ENCODE measurements at regions of chr17 and their contacts with region 1.

Region 1: DNA sequence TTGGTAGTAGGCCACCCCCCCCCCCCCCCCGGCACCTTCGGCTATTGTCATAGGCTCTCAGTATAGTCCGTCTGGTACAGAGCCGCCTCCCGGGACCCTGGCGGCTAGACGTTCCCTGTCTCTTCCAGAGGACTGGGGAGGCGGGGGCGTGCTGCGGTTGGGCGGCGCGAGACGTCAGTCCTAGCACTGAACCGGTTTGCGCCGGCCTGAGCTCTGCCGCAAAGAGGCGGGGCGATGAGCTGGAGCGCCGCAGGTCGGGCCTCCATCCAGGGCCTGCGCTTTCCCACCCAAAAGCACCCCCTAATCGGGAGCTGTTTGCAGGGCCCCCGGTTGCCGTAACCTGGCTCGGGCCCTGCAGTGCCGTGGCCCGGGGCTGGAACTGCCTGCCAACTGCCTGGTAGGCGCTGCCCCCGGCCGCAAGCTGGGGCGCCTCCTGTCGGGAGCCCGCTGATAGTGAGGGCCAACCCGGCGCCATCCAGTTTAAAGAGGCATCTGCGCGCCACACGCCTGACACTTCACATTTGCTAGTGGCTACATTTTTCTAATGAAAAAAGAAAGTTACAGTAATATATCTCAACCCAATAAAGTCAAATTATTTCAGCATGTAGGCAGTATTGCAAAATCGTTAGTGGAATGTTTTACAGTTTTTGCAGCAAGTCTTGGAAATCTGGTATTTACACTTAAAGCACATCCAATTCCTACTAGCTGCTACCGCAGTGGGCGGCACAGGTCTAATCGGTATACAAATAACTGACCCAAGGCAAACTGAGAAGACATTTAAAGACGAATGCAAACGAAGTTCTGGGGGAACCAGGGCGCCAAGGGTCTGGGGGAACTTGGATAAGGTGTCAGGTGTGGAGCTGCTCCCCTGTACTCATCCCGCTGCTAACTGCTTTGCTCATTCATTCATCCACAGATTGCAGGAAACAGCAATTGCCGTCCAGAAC is 748 bp upstream of the USP22 start:
- DNase-seq: peak; percentile 95 to 98
- H3K4me3 ChIP-seq: peak overlapping the region; percentile 65
- H3K27ac ChIP-seq: peak overlapping the region; percentile 33; the same call in 1 of the 2 replicates
- H3K4me1 ChIP-seq: peaks cover 20% of the 10 kb centered on the region
- H3K27me3 ChIP-seq: no peaks in the 10 kb centered on the region
- CTCF ChIP-seq: peak; percentile 82

Region 2: DNA sequence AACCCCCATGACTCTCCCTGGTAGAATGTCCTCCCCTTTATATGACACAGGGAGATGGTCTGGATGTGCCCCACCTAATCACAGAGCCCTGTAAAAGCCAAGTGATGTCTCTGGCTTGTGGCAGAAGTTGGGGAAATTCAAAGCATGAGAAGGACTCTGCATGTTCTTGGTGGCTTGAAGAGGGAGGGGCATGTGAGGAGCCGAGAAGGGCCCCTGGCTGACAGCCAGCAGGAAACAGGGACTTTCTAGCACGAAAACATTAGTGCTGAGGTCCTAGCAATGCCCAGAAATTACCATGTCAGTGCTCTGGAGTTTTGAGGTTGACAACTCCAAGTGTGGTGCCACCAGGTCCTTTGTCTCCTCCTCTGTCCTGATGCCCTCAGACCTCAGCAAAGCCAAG is 76.7 kb before region 1 on chr17:
- CTCF ChIA-PET with region 1: no interaction called
- POLR2A ChIA-PET with region 1: no interaction called
- intact Hi-C with region 1: no loop called
- DNase-seq: peak in 1 of 2 experiments; percentile 26
- H3K4me3 ChIP-seq: no peak overlapping the region
- H3K27ac ChIP-seq: no peak overlapping the region
- H3K4me1 ChIP-seq: no peaks in the 10 kb centered on the region
- H3K27me3 ChIP-seq: peaks cover 20% of the 10 kb centered on the region; the same call in 1 of the 2 replicates
- CTCF ChIP-seq: no peak

Region 3: DNA sequence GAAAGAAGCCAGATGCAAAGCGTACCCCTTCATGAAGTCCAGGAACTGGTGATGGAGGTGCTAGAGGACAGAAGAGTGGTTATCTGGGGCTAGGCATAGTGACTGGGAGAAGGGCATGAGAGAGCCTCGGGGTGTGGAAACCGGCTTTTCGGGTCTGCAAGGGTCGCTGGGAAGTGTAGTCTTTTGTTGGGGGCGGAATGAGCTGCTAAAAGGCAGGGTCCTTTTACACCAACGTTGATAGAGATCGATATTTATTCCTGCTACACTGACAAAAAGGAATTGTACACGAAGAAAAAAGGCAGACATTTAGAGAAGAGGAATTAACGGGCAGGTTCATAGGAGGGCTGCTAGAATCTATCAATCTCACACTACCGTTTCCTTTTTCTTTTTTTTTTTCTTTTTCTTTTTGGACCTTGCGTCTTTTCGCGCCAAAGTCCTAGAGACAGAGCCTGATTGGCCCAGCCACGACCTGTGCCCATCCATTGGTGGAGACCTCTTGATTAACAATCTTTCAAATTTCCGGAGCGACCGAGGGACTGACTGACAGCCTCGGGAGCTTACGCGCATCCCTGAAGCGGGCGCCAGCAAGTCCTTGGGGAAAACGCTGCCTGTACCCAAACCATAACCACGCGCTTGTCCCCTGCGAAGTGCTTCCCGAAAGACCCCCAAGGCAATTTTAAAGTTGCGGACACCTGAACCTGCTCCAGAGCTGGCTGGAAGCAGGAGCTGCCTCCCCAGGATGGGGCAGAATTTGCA is 55.6 kb after region 1 on chr17:
- CTCF ChIA-PET with region 1: interaction called, 8 read pairs
- POLR2A ChIA-PET with region 1: interaction called, 24 read pairs
- intact Hi-C with region 1: loop called (anchors 1 kb)
- DNase-seq: peak; percentile 78 to 81
- H3K4me3 ChIP-seq: peak overlapping the region; percentile 80
- H3K27ac ChIP-seq: no peak overlapping the region
- H3K4me1 ChIP-seq: peaks cover 7% of the 10 kb centered on the region; the same call in 1 of the 2 replicates
- H3K27me3 ChIP-seq: no peaks in the 10 kb centered on the region
- CTCF ChIP-seq: no peak

Region 4: GRCh38 chr17:21126645-21127510 is 83.3 kb after region 1 on chr17 and contains the start of gene DHRS7B:
- CTCF ChIA-PET with region 1: no interaction called
- POLR2A ChIA-PET with region 1: no interaction called
- intact Hi-C with region 1: loop called (anchors 1 kb)
- DNase-seq: peak; percentile 92 to 97
- H3K4me3 ChIP-seq: peak within 1 kb of the TSS; percentile 93
- H3K27ac ChIP-seq: peak within 1 kb of the TSS; percentile 57
- H3K4me1 ChIP-seq: peaks cover 12% of the 10 kb centered on the region
- H3K27me3 ChIP-seq: no peaks in the 10 kb centered on the region
- CTCF ChIP-seq: no peak
- total RNA-seq, gene DHRS7B: 27.9 and 30.1 TPM in 2 replicates

Region 5: DNA sequence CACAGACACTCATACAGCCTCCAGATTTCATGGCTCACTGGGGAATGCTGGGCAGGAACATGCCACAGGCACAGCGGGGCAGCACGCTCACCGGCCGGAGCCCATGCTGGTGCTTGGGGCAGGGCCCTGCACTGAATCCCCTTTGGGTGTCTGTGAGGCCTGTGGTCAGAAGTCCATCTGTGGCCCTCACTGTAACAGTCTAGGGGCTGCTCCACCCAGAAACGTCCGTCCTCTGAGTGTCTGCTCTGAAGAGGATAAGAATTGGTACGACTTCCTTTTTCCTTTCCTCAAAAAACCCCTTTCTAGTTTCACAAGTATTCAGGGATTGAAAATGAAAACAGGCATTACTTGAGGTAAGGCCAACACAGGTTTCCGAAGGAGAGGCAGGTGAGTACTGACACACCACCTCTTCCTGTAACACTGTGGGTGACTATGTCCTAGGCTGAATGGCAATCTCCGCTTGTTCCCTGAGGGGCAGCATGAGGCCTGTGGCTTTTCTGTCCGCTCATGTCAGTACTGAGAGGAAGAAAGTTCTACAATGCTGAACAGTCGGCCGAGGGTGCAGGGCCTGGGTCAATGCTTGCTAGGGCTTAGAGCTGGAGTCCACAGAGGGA is 127.9 kb after region 1 on chr17:
- CTCF ChIA-PET with region 1: no interaction called
- POLR2A ChIA-PET with region 1: no interaction called
- intact Hi-C with region 1: no loop called
- DNase-seq: no peak
- H3K4me3 ChIP-seq: no peak overlapping the region
- H3K27ac ChIP-seq: no peak overlapping the region
- H3K4me1 ChIP-seq: no peaks in the 10 kb centered on the region
- H3K27me3 ChIP-seq: no peaks in the 10 kb centered on the region
- CTCF ChIP-seq: no peak

Region 6: GRCh38 chr17:21275579-21276263 is 232.2 kb after region 1 on chr17:
- CTCF ChIA-PET with region 1: no interaction called
- POLR2A ChIA-PET with region 1: no interaction called
- intact Hi-C with region 1: loop called (anchors 2 kb)
- DNase-seq: peak; percentile 62 to 91
- H3K4me3 ChIP-seq: peak overlapping the region; percentile 70
- H3K27ac ChIP-seq: no peak overlapping the region
- H3K4me1 ChIP-seq: peaks cover 4% of the 10 kb centered on the region; the same call in 1 of the 2 replicates
- H3K27me3 ChIP-seq: no peaks in the 10 kb centered on the region
- CTCF ChIP-seq: no peak

Measured in PC-9 (cell line).